ENCODE measurements at regions of chr2 and their contacts with region 1.

Region 1: DNA sequence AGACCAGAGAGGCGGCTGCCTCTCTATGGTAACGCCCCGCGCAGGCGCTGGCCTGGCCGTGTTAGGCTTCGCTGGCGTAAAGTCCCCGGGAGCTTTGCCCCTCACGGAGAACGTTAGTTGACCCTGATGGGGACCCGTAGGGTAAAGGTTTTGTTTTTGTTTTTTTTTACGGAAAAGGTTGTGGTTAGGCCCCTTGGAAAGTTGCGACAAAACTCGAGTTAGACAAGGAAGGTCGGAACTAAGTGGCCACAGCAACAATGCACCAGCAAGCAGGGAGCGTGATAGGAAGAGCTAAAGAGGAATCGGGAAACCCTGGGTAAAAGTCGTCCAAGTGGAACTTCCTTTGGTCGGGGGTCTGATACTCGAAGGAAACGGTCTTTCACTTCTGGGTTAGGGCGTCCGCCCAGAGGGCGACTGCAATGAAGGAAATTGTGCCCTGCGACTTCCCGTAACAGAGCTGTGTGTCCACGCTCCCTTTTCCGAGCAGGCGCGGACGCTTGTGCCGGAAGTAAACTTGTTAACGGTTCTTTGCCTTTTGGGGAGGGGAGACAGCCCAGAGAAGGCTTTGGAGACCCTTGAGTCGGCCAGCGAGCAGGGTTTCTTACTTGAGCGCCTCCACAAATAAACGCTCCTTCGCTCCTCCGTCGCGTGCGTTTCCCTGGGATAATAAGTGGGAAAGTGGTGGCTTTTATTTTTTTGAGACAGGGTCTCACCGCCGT is 493 bp upstream of the CLASP1 start:
- DNase-seq: peak; percentile 96 to 99 (median 98)
- H3K4me3 ChIP-seq: peak overlapping the region; percentile 88 to 97
- H3K4me3 Mint-ChIP-seq: peak overlapping the region; percentile 96 to 100 (median 99)
- H3K27ac ChIP-seq: peak overlapping the region; percentile 94
- H3K27ac Mint-ChIP-seq: peak overlapping the region; percentile 99 to 100 (median 99)
- H3K4me1 ChIP-seq: peaks cover 56% of the 10 kb centered on the region
- H3K4me1 Mint-ChIP-seq: peaks cover 50 to 93% (median 65%) of the 10 kb centered on the region in 4 donors
- H3K27me3 ChIP-seq: no peaks in the 10 kb centered on the region
- H3K27me3 Mint-ChIP-seq: peaks cover 0 to 3% of the 10 kb centered on the region in 2 donors

Region 2: DNA sequence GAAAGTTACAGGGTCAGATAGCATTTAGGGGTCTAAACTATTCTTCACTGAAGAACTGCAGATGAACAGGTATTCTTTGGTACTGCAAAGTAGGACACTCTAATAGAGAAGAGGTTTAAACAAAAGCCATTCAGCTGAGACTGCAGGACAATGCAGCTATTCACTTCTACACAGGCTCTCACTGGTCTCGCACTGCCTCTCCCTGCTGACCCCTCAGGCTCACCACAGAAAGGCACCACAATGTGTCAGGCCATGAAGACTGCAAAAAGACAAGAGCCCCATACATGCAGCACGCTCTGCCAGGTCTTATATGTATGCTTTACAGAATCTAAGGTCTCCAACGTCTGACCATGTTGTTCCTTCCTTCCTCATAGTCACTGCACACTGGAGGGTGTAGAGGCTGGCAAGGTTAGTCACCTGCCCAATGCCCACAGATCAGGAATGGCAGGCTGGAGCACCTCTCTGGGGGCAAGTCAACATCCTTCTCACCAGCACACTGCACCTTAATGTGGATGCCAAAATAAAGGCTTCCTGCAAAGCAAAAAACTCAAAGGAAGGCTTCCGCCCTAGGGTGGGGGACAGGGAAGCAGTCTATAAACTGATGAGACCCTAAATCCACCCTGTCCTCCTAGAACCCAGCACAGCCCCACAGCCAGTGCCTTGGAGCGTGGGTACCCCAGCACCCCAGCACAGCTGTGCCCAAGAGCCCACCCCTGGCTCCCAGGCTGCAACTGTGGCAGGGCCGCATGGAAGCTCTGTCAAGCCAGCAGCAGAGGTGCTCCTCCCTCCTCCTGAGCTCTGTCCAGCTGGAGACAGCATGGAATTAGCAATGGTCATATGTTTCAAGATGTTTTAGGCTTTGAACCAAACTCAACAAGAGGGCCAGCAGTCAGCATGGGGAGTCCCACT is 129.8 kb before region 1 on chr2:
- CTCF ChIA-PET with region 1: no interaction called
- POLR2A ChIA-PET with region 1: no interaction called
- intact Hi-C with region 1: no loop called
- DNase-seq: no peak
- H3K4me3 ChIP-seq: no peak overlapping the region
- H3K4me3 Mint-ChIP-seq: no peak overlapping the region
- H3K27ac ChIP-seq: no peak overlapping the region
- H3K27ac Mint-ChIP-seq: peak overlapping the region in 1 of 7 donors; percentile 79
- H3K4me1 ChIP-seq: no peaks in the 10 kb centered on the region
- H3K4me1 Mint-ChIP-seq: peaks cover 0 to 5% (median 3%) of the 10 kb centered on the region in 4 donors
- H3K27me3 ChIP-seq: no peaks in the 10 kb centered on the region
- H3K27me3 Mint-ChIP-seq: no peaks in the 10 kb centered on the region

Region 3: DNA sequence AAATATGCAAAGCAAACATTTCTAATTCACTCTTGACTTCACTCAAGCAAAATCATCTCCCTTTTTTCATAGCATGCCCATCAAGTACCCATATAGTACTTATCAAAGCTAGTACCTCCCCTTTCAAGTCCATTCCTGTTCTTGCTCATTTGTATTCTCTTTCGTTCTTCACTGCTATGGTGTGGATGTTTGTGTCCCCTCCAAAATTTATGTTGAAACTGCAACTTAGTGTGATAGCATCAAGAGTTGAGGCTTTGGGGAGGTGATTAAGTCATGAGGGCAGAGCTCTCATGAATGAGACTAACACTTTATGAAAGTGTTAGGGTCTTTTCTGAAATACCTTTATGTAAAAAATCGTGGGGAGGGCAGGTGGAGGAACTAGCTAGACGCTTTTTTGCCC is 66.2 kb before region 1 on chr2:
- CTCF ChIA-PET with region 1: no interaction called
- POLR2A ChIA-PET with region 1: no interaction called
- intact Hi-C with region 1: no loop called
- DNase-seq: no peak
- H3K4me3 ChIP-seq: no peak overlapping the region
- H3K4me3 Mint-ChIP-seq: no peak overlapping the region
- H3K27ac ChIP-seq: no peak overlapping the region
- H3K27ac Mint-ChIP-seq: peak overlapping the region in 1 of 7 donors; percentile 38
- H3K4me1 ChIP-seq: no peaks in the 10 kb centered on the region
- H3K4me1 Mint-ChIP-seq: peaks cover 20 to 47% (median 27%) of the 10 kb centered on the region in 4 donors
- H3K27me3 ChIP-seq: no peaks in the 10 kb centered on the region
- H3K27me3 Mint-ChIP-seq: no peaks in the 10 kb centered on the region

Region 4: GRCh38 chr2:121634354-121635307 is 15.1 kb before region 1 on chr2:
- CTCF ChIA-PET with region 1: interaction called, 5 read pairs
- POLR2A ChIA-PET with region 1: interaction called, 14 read pairs
- intact Hi-C with region 1: no loop called
- DNase-seq: no peak
- H3K4me3 ChIP-seq: no peak overlapping the region
- H3K4me3 Mint-ChIP-seq: peak overlapping the region in 6 of 8 donors; percentile 8 to 42 (median 20)
- H3K27ac ChIP-seq: no peak overlapping the region
- H3K27ac Mint-ChIP-seq: peak overlapping the region; percentile 20 to 81 (median 43)
- H3K4me1 ChIP-seq: peaks cover 20% of the 10 kb centered on the region
- H3K4me1 Mint-ChIP-seq: peaks cover 25 to 43% (median 35%) of the 10 kb centered on the region in 4 donors
- H3K27me3 ChIP-seq: no peaks in the 10 kb centered on the region
- H3K27me3 Mint-ChIP-seq: no peaks in the 10 kb centered on the region

Region 5: DNA sequence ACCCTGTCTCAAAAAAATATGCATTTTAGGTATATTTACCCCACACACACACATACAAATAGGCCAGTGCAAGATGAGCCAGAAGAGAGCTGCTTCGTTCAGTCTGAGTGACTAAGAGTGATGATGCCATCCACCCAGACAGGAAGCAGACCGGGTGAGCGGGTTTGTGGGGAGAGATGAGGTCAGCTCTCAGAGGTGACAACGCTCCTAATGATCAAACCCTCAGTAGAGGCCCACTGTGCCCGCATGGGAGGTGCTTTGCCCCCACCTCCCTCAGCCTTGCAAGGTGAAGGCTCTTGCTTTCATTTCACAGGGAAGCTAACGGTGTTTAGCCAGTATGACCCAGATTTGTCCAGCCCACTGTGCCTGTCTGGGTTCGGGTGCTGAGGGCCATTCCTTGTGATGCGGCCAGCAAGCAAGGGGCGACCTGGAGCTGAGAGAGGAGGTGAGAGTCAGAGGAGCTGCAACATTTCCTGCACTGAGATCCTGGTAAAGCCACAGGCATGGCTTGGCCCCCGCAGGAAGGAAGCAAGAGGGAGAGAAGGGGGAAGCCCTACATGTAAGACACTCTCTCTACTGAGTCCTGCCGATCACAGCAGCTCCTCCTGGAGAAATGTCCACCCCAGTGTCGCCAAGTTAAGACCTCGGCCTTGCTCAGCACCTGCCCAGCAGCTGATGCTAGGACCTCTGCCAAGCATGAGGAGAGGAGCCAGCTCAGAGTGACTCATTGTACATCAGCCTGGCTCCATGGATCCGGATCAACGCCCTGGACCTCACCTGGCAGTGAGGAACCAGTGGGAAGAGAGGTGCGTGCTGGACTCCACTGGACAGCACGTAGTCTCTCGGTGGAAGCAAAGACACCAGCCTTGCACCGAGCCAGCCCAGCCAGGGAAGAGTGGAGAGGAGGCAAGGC is 49.9 kb after region 1 on chr2:
- CTCF ChIA-PET with region 1: interaction called, 6 read pairs
- POLR2A ChIA-PET with region 1: interaction called, 69 read pairs
- intact Hi-C with region 1: loop called (anchors 1 kb)
- DNase-seq: peak; percentile 80 to 98 (median 83)
- H3K4me3 ChIP-seq: peak overlapping the region; percentile 5 to 36
- H3K4me3 Mint-ChIP-seq: peak overlapping the region; percentile 82 to 92 (median 84)
- H3K27ac ChIP-seq: peak overlapping the region; percentile 55
- H3K27ac Mint-ChIP-seq: peak overlapping the region; percentile 92 to 99 (median 99)
- H3K4me1 ChIP-seq: peaks cover 32% of the 10 kb centered on the region
- H3K4me1 Mint-ChIP-seq: peaks cover 27 to 51% (median 36%) of the 10 kb centered on the region in 4 donors
- H3K27me3 ChIP-seq: no peaks in the 10 kb centered on the region
- H3K27me3 Mint-ChIP-seq: no peaks in the 10 kb centered on the region

Region 6: DNA sequence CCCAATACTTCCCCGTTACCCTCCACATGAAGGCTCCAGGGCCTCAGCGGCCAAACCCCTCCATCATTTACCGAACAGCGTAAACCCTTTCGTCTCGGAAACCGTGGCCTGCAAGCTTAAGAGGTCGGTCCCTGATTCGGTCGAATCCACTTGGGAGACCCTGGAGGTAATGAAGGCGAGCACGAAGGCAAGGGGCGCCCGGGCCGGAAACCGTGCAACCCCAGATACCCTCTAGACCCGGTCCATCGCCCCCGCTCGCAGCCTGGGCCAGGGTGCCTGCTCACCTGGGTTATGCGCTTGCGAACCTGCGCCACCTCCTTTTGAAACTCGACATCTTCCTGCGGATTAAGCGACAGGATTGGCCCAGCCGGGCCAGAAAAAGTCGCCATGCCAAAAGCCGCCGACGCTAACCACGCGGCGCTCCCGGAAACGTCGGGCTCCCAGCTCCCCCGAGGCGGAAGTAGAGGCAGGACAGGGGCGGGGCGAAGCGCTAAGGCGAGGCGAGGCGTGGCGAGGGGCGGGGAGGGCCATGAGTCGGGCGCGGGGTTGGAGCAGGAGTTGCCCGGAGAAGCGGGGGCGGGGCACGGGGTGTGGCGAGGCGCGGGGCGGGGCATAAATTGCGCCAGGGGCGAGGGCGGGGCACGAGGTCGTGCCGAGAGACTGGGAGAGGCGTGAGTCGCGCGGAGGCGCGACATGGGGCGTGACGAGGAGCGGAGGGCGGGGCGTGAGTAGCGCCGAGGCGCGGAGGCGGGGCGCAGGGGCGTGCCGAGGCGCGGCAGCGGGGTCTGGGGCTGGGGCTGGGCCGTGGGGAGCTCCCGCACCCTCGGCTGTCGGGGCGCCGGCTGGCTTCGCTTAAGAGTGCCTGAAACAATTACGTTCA is 86.9 kb after region 1 on chr2 and contains the start of gene NIFK:
- CTCF ChIA-PET with region 1: no interaction called
- POLR2A ChIA-PET with region 1: interaction called, 49 read pairs
- intact Hi-C with region 1: loop called (anchors 1 kb)
- DNase-seq: peak; percentile 99 to 100 (median 99)
- H3K4me3 ChIP-seq: peak within 1 kb of the TSS; percentile 80 to 88
- H3K4me3 Mint-ChIP-seq: peak within 1 kb of the TSS; percentile 94 to 99 (median 98)
- H3K27ac ChIP-seq: peak within 1 kb of the TSS; percentile 80
- H3K27ac Mint-ChIP-seq: peak within 1 kb of the TSS; percentile 94 to 98 (median 97)
- H3K4me1 ChIP-seq: peaks cover 31% of the 10 kb centered on the region
- H3K4me1 Mint-ChIP-seq: peaks cover 15 to 51% (median 32%) of the 10 kb centered on the region in 4 donors
- H3K27me3 ChIP-seq: no peaks in the 10 kb centered on the region
- H3K27me3 Mint-ChIP-seq: no peaks in the 10 kb centered on the region
- total RNA-seq, gene NIFK: 61.6 to 62.8 TPM